ENCODE measurements at regions of chr1 and their contacts with region 1.

Region 1: DNA sequence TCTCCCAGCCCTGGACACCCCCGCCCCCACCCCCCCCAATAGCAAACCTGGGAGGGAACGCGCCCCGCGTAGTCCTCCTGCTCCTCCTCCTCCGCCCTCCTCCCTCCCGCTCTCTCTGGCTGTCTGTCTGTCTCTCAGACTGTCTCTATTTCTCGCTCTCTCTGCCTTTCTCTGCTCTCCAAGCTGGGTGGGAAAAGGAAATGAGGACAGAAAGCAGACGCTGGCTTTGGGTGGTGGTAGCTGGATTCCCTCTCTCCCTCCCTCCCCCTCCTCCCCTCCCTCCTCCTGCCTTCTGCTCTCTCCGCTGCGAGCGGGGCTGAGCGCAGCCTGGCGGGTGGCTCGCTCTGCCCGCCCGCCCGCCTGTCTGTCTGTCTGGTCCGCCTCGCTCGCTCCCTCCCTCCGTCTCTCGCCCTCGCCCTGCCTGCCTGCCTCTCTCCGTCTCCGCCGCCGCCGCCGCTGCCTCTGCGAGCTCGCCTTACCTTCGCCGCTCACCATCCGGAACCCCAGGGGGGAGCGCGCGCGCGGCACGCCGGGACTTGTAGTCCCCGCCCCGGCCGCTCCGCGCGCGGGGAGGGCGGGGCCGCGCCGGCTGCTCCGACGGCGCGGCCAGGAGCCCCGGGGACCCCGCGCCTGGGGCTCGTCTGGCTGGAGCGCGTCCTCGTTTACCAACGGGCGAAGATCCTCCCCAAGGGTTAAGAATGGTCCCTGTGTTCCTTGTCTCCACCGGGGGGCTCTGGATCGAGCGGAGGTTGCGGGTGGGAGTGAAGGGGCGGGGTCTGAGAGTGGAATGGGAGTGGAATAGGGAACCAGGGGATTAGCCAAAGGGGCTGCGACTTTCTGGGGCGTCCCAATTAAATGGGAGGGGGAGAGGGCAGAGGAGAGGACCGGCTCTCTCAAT is at the start of gene AHDC1:
- DNase-seq: peak; percentile 80 to 88
- ATAC-seq: peak; percentile 71 to 76
- H3K4me3 ChIP-seq: peak within 1 kb of the TSS; percentile 90
- H3K27ac ChIP-seq: peak within 1 kb of the TSS; percentile 83 to 89
- H3K4me1 ChIP-seq: peaks cover 47% of the 10 kb centered on the region
- CTCF ChIP-seq: no peak
- EP300 ChIP-seq: no peak
- POLR2A ChIP-seq: peak; percentile 65
- RAD21 ChIP-seq: 0 out of 5 replicates have a peak, but pooled peaks of 1 of the 2 experiments have one; percentile 16
- polyA plus RNA-seq, gene AHDC1: 1.3 and 2.6 TPM in 2 replicates

Region 2: GRCh38 chr1:27357281-27358037 is 246.5 kb before region 1 on chr1:
- CTCF ChIA-PET with region 1: interaction called, 13 read pairs
- POLR2A ChIA-PET with region 1: no interaction called
- DNase-seq: peak; percentile 49 to 78
- ATAC-seq: peak; percentile 75 to 88; a peak in 5 of 6 replicates
- H3K4me3 ChIP-seq: no peak overlapping the region
- H3K27ac ChIP-seq: no peak overlapping the region
- H3K4me1 ChIP-seq: no peaks in the 10 kb centered on the region
- CTCF ChIP-seq: peak; percentile 79
- EP300 ChIP-seq: no peak
- POLR2A ChIP-seq: no peak
- RAD21 ChIP-seq: peak; percentile 31 to 46; a peak in 2 of 5 replicates

Region 3: DNA sequence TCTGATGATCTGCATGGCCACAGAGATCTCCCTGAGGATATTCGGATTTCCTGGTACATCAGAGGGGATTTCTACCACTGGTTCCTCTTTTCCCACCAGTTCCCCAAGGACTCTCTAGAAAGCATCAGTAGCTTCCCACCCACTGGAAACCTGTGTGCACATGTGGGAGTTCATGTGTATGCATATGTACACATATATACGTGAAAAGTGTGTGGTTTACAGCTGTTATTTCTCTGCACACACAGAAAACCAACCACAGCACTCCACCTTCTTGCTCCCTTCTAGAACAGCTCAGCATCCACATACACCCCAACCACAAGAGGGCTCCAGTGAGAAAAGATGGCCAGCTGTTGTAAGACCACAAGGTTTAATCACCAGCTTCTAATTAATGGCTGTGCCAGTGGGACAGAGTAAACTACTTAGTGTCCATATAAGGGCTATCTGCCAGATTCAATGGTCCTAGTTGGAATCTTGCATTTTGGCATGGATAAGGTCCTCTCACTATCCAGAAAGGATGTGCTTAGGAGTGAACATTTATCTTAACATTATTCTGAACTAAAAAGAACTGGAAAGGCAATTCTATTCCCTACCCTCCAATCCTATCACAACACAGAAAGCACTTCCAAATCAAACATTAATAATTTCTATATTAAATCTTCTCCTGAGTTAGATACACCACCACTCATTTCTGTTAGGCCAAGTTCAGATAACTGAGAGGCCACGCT is 187.4 kb before region 1 on chr1:
- CTCF ChIA-PET with region 1: interaction called, 66 read pairs
- POLR2A ChIA-PET with region 1: no interaction called
- DNase-seq: peak in 1 of 2 experiments; percentile 52
- ATAC-seq: peak; percentile 62 to 82; a peak in 4 of 6 replicates
- H3K4me3 ChIP-seq: no peak overlapping the region
- H3K27ac ChIP-seq: no peak overlapping the region
- H3K4me1 ChIP-seq: peaks cover 17% of the 10 kb centered on the region
- CTCF ChIP-seq: peak; percentile 60
- EP300 ChIP-seq: no peak
- POLR2A ChIP-seq: no peak
- RAD21 ChIP-seq: peak; percentile 48 to 56

Region 4: DNA sequence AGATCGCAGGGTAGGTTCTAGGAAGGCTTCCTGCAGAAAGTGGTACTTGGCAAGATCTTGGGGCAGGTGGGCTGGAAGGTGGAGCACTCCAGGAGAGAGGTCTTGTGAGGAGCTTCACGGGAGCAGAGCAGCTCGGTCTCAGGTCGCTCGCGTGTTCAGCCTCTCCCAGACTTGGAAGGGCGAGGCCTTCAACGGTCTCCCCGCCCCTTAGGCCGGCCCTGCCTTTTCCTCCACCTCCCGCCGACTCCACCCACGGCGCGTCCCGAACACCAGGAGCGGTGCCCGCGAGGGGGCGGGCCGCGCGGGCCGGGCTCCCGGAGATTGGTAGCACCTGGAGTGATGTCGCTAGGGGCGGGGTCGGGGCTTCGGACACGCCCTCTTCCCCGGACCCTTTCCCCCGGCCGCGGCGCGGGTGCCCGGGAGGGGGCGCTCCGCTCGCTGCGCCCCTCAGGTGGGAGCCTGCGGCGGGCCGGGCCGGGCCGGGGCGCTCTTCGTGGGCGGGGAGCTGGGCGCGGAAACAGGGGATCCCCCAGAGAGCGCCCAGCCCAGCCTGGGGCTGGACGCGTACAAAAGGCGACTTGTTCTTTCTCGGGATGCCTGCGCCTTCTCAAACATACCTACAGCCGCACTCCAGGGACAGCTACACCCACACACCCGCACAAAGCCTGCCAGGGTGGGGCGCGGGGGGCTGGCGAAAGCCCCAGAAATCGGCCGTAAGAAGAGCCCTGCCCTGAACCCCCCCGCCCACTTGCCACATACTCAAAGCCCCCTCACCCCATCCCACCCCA is 35.4 kb before region 1 on chr1:
- CTCF ChIA-PET with region 1: interaction called, 314 read pairs
- POLR2A ChIA-PET with region 1: no interaction called
- DNase-seq: peak; percentile 86 to 93
- ATAC-seq: peak; percentile 76 to 88
- H3K4me3 ChIP-seq: peak overlapping the region; percentile 44
- H3K27ac ChIP-seq: peak overlapping the region; percentile 85
- H3K4me1 ChIP-seq: peaks cover 94% of the 10 kb centered on the region
- CTCF ChIP-seq: peak; percentile 80
- EP300 ChIP-seq: no peak
- POLR2A ChIP-seq: peak; percentile 59
- RAD21 ChIP-seq: peak in 1 of 2 experiments; percentile 43; a peak in 1 of 5 replicates

Region 5: DNA sequence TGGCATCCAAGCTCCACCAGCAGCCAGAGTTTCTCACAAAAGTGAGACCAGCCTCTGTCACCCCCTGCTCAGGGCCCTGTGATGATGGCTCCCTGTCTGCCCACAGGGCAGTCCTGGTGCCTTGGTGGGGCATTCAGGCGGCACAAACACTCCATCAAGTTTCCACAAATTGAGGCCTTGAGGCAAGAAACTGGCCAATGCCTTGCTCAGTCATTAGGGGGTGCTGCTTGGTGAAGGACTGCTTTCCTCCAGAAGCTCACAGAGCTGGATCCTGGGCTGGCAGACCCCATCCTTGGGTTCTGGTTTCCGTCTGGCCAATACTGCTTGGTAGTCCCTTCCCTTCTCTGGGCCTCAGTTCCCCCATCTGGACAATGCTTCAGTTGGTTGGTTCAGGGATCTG is 12.5 kb after region 1 on chr1:
- CTCF ChIA-PET with region 1: interaction called, 61 read pairs
- POLR2A ChIA-PET with region 1: interaction called, 4 read pairs
- DNase-seq: no peak
- ATAC-seq: no peak
- H3K4me3 ChIP-seq: no peak overlapping the region
- H3K27ac ChIP-seq: no peak overlapping the region
- H3K4me1 ChIP-seq: peaks cover 3% of the 10 kb centered on the region; the same call in 1 of the 3 replicates
- CTCF ChIP-seq: no peak
- EP300 ChIP-seq: no peak
- POLR2A ChIP-seq: no peak
- RAD21 ChIP-seq: no peak

Measured in A549 (cell line).